Panc1 (cell line): ENCODE measurements at regions of chr1 and their contacts with region 1.

Region 1: DNA sequence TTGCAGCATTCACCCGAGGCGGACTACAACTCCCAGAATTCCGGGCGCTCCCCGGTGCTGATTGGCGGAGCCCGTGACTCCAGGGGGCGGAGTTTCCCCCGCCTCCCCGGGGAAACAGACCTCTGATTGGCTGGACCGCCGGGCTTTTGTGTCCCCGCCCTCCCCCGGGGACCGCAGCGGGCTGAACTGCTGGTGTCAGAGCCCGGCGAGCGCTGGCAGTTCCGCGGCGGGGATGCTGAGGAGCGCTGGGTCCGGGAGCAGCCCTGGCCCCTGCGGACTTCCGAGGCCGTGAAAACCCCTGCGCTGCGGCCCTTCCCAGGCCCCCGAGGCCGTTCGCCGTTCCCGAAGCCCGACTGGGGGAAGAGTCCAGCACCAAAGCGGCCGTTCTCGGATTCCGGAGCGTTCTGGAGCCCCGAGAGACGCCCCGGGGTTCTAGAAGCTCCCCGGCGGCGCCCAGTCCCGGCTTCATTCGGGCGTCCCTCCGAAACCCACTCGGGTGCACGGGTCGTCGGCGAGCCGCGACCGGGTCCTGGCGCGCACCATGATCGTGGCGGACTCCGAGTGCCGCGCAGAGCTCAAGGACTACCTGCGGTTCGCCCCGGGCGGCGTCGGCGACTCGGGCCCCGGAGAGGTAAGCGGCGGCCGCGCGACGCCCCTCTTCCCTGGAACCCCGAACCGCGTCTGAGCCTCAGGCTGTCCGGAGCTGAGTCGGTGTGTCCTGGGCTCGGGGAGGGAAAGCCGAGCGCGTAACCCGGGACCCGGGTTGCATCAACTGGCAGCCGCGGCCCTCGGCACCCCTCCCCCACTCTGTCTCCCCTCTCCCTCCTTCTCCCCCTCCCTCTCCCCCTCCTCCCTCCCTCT is at the start of gene SESN2:
- DNase-seq: peak; percentile 100
- ATAC-seq: peak; percentile 94
- H3K4me3 ChIP-seq: peak within 1 kb of the TSS; percentile 80 to 98
- H3K27ac ChIP-seq: peak within 1 kb of the TSS; percentile 88
- H3K4me1 ChIP-seq: peaks cover 31% of the 10 kb centered on the region
- H3K27me3 ChIP-seq: no peaks in the 10 kb centered on the region
- CTCF ChIP-seq: no peak
- total RNA-seq, gene SESN2: 19.7 TPM

Region 2: DNA sequence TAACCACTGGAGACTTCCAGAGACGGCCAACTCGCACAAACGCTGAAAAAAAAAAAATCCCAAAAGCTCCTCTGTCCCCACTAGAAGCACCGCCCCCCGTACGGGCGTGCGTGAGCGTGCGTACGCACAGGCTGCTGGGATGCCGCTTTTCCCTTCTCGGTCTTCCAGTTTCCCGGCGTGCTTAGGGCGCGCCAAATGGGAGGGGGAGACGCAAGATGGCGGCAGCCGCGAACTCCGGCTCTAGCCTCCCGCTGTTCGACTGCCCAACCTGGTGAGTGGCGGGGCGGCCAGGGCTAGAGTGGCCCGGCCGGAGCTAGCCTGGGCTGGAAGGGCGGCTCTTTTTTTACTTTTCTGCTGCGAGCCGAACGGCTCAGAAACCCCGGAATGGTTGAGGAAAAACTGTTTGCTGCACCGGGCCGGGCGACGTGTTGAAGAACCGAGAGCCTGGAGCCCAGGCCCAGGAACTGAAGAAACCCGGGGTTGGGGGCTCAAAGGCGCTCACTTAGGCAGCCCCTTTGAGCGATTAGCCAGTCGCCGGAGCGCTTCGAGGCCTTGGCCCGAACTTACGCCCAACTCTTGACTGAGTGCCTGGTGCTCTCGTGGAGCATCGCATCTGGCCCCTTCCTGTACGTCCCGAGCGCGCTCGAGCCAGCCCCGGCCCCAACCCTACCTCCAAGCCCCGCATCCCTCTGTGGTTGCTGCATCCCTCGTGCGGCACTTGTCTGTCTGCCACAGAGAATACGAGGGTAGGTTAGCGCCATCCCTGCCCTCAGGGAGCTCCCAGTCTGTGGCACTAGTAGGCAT is 428.7 kb before region 1 on chr1 and contains the start of gene PPP1R8:
- CTCF ChIA-PET with region 1: interaction called, 12 read pairs
- POLR2A ChIA-PET with region 1: no interaction called
- in situ Hi-C with region 1: no loop called
- intact Hi-C with region 1: no loop called
- DNase-seq: peak; percentile 86
- ATAC-seq: peak; percentile 100
- H3K4me3 ChIP-seq: peak within 1 kb of the TSS; percentile 92 to 95
- H3K27ac ChIP-seq: peak within 1 kb of the TSS; percentile 87
- H3K4me1 ChIP-seq: peaks cover 13% of the 10 kb centered on the region; the same call in 1 of the 2 replicates
- H3K27me3 ChIP-seq: no peaks in the 10 kb centered on the region
- CTCF ChIP-seq: no peak
- total RNA-seq, gene PPP1R8: 59.7 TPM

Region 3: DNA sequence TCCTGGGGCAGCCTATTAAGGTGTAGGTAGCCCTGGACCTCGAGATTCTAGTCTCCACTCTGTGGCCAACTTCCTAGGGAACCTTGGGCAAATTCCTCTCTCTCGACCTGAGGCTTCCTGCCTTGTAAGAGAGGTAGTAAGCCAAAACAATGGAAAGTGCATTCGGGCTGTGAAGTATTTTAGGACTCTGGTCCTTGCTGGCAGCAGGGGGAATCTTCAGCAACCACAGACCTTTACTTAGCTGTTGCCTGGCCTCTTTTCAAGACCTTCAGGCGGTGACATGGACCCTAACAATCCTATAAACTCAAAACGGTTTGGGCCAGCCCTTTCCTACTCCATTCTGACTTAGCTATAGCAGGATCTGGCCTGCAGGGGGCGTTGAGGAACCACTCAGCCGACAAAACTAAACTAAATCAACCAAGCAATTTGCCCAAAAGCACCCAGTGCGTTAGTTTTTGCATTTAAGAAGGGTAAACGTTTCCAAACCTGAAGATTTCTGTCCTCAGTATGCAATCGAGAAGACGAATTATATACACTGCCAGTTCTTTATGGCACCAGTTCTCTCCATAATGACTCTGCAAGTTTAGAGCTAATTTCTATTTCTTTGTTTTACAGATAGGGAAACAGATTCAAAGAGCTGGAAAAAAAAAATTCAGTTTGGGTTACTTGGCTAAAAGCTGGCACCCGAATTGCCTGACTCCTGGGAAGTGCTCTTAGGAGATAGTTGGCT is 11.1 kb before region 1 on chr1:
- CTCF ChIA-PET with region 1: interaction called, 10 read pairs
- POLR2A ChIA-PET with region 1: interaction called, 17 read pairs
- in situ Hi-C with region 1: no loop called
- intact Hi-C with region 1: no loop called
- DNase-seq: no peak
- ATAC-seq: peak; percentile 67
- H3K4me3 ChIP-seq: peak overlapping the region; percentile 65 to 81
- H3K27ac ChIP-seq: peak overlapping the region; percentile 77
- H3K4me1 ChIP-seq: peaks cover 29% of the 10 kb centered on the region
- H3K27me3 ChIP-seq: no peaks in the 10 kb centered on the region
- CTCF ChIP-seq: peak; percentile 97

Region 4: GRCh38 chr1:28341591-28341990 is 82.1 kb after region 1 on chr1:
- CTCF ChIA-PET with region 1: no interaction called
- POLR2A ChIA-PET with region 1: interaction called, 3 read pairs
- in situ Hi-C with region 1: loop called (anchors 10 kb)
- intact Hi-C with region 1: no loop called
- DNase-seq: no peak
- ATAC-seq: no peak
- H3K4me3 ChIP-seq: no peak overlapping the region
- H3K27ac ChIP-seq: no peak overlapping the region
- H3K4me1 ChIP-seq: no peaks in the 10 kb centered on the region
- H3K27me3 ChIP-seq: no peaks in the 10 kb centered on the region
- CTCF ChIP-seq: no peak

Region 5: DNA sequence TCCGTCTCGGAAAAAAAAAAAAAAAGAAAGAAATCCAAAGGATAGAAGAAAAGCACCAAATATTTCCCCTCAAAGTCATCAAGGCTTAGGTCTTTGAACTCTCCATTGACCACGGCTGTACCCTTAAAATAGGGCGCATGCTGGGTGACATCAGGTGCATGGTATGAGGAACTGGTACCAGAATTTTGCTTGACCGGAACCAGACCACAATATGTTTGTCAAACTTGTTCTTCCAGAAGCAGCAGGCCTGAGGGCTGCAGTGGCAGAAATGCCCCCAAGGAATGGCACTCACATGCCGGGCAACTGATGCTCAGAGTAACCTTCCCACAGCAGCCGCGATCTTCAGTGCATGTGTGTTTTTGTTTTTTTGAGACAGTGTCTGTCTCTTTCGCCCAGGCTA is 267.4 kb after region 1 on chr1:
- CTCF ChIA-PET with region 1: no interaction called
- POLR2A ChIA-PET with region 1: no interaction called
- in situ Hi-C with region 1: no loop called
- intact Hi-C with region 1: no loop called
- DNase-seq: no peak
- ATAC-seq: no peak
- H3K4me3 ChIP-seq: no peak overlapping the region
- H3K27ac ChIP-seq: no peak overlapping the region
- H3K4me1 ChIP-seq: no peaks in the 10 kb centered on the region
- H3K27me3 ChIP-seq: no peaks in the 10 kb centered on the region
- CTCF ChIP-seq: no peak

Region 6: GRCh38 chr1:29210278-29211085 is 950.9 kb after region 1 on chr1:
- CTCF ChIA-PET with region 1: no interaction called
- POLR2A ChIA-PET with region 1: no interaction called
- in situ Hi-C with region 1: no loop called
- intact Hi-C with region 1: no loop called
- DNase-seq: no peak
- ATAC-seq: no peak
- H3K4me3 ChIP-seq: no peak overlapping the region
- H3K27ac ChIP-seq: no peak overlapping the region
- H3K4me1 ChIP-seq: no peaks in the 10 kb centered on the region
- H3K27me3 ChIP-seq: no peaks in the 10 kb centered on the region
- CTCF ChIP-seq: no peak